ENCODE measurements at regions of chr22 and their contacts with region 1.

Region 1: GRCh38 chr22:30262917-30263741 is 3.5 kb downstream of the OSM start:
- DNase-seq: peak; percentile 84
- ATAC-seq: peak; percentile 47 to 55

Region 2: DNA sequence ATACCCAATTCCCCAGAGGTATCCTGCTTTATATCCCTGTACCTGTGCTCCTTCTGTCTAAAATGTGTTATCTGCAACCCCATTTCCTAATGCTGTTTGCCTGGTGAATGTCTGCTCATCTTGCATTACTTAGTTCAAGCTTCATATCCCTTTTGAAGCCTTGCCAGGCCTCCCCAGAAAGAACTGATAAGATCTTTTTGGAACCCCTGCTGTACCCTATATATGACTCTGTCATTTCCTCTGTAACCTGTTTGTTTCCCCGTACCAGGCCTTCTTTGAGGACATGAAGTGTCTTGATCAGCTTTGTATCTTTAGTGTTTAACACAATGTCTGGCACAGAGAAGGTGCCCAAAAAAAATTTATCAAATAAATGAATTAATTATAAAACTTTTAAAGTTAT is 94.1 kb before region 1 on chr22:
- intact Hi-C with region 1: no loop called
- DNase-seq: no peak
- ATAC-seq: no peak

Region 3: DNA sequence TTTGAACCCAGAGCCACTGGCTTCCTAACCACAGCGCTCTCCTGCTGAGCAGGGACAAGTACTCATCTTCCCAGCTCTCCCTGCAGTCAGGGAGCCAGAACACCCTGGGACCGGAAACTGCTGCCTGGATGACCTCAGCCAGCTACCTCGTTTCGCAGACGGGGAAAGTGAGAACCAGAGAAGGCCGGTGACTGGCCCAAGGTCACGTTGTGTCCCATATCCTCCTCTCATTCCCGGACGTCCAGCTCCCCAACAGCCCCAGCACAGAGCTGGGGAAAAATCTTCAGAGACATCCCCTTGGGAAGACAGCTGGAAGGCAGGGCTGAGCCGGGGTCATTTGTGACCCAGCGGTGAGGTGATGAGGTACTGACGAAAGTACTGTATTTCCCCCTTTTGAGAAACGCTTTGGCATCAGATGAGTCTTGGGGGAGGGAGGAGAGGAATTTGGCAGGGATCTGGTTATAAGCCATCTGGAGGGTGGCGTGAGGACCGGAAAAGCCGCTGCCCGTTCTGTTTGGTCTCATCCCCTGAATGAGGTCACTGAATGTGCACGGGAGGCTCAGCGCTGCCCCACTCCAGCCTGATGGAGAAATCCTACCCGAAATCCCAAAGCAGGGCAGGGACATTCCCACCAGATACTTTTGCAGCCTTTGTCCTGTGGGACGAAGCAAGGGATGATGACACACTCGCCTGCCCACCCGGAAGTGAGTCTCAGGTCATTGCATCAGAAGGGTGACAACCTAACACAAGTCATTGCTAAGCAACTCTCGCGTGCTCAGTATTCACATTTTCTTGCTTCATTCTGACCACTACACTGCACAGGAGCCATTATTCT is 57.6 kb before region 1 on chr22:
- intact Hi-C with region 1: no loop called
- DNase-seq: peak; percentile 75
- ATAC-seq: peak; percentile 32 to 51

Region 4: GRCh38 chr22:30485362-30485988 is 222.3 kb after region 1 on chr22:
- intact Hi-C with region 1: loop called in 1 of 2 experiments (anchors 10 kb)
- DNase-seq: peak; percentile 67
- ATAC-seq: peak; percentile 89 to 94